A549 (cell line): ENCODE measurements at regions of chr5 and their contacts with region 1.

Region 1: GRCh38 chr5:135466178-135467050 is 14.3 kb upstream of the TIFAB start:
- DNase-seq: peak; percentile 61 to 87
- ATAC-seq: peak; percentile 87 to 95
- H3K4me3 ChIP-seq: no peak overlapping the region
- H3K27ac ChIP-seq: peak overlapping the region in 1 of 2 experiments; percentile 56; a peak in 2 of 6 replicates
- H3K4me1 ChIP-seq: no peaks in the 10 kb centered on the region
- CTCF ChIP-seq: peak; percentile 85
- EP300 ChIP-seq: no peak
- POLR2A ChIP-seq: no peak
- RAD21 ChIP-seq: peak; percentile 93 to 98

Region 2: DNA sequence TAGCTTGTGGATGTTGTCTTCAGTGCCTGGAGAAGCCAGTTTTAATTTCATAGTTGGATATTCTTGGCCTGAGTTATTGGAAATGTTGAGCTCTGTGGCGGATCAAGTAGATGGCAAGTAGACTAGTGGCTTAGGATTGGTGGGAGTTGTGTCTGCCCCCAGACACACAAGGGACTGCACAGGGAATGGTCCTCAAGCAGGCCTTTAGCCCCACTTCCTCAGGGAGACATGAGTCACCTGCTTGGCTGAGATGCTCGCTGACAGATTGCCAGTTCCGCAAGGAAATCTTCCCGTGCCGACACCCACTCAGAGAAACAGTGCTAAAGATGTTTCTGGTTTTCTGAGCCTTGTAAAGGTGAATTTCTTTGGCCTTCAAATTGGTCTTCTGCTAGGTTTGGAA is 517.5 kb before region 1 on chr5:
- CTCF ChIA-PET with region 1: no interaction called
- POLR2A ChIA-PET with region 1: no interaction called
- DNase-seq: no peak
- ATAC-seq: no peak
- H3K4me3 ChIP-seq: no peak overlapping the region
- H3K27ac ChIP-seq: no peak overlapping the region
- H3K4me1 ChIP-seq: no peaks in the 10 kb centered on the region
- CTCF ChIP-seq: no peak
- EP300 ChIP-seq: no peak
- POLR2A ChIP-seq: no peak
- RAD21 ChIP-seq: no peak

Region 3: GRCh38 chr5:135443161-135443960 is 23.1 kb before region 1 on chr5:
- CTCF ChIA-PET with region 1: interaction called, 43 read pairs
- POLR2A ChIA-PET with region 1: no interaction called
- DNase-seq: no peak
- ATAC-seq: no peak
- H3K4me3 ChIP-seq: no peak overlapping the region
- H3K27ac ChIP-seq: no peak overlapping the region
- H3K4me1 ChIP-seq: no peaks in the 10 kb centered on the region
- CTCF ChIP-seq: no peak
- EP300 ChIP-seq: no peak
- POLR2A ChIP-seq: no peak
- RAD21 ChIP-seq: no peak

Region 4: DNA sequence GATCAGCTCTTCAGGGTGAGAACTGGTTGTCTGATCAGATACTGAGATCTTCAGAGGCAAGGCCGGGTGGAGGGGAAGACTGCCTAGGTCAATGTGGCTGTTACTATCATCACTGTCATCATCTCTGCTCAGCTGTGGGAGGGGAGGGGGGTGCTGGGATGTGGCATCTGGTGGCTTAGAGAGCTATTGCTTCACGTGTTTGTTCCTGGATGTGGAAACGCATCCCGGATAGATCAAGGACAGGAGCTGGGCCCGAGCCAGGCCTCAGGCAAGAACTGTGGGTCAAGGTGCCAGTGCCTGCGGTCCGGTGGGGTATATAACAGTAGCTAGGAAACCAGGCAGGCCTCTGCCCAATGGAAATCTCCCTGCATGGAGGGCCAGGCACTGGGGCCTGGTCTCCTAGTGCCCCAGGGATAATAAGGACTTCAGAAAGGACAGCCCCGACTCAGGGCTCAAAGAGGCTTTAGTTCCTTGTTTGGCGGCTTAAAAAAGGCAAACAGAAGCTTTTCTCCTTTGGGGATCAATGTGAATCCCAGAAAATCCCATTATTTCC is 16.0 kb after region 1 on chr5:
- CTCF ChIA-PET with region 1: interaction called, 104 read pairs
- POLR2A ChIA-PET with region 1: no interaction called
- DNase-seq: no peak
- ATAC-seq: no peak
- H3K4me3 ChIP-seq: no peak overlapping the region
- H3K27ac ChIP-seq: no peak overlapping the region
- H3K4me1 ChIP-seq: no peaks in the 10 kb centered on the region
- CTCF ChIP-seq: no peak
- EP300 ChIP-seq: no peak
- POLR2A ChIP-seq: no peak
- RAD21 ChIP-seq: no peak

Region 5: DNA sequence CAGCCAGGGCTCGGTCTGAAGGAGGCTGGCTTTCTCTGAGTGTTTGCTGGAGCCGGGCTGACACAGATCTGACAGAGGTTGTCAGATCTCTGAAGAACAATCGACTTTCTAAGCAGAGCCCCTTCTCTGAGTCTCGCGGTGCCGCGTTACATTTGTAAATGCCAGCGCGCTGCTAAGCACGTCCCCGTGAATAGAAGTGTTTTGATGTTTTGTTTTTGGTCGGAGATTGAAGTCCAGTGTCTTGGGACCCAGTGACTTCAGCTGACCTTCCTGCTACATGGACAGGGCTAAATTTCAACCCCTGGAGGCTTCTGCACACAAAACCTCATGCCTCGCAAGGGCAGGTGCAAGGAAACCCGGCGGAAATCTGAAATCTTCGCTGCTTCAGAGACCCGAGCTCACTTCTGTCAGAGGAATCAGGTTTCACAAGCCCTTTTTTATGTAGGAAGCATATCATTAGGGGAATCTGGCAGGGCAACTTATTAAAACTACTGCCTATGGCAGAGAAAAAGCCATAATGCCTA is 42.1 kb after region 1 on chr5:
- CTCF ChIA-PET with region 1: interaction called, 10 read pairs
- POLR2A ChIA-PET with region 1: no interaction called
- DNase-seq: no peak
- ATAC-seq: no peak
- H3K4me3 ChIP-seq: no peak overlapping the region
- H3K27ac ChIP-seq: no peak overlapping the region
- H3K4me1 ChIP-seq: peaks cover 5% of the 10 kb centered on the region; the same call in 1 of the 3 replicates
- CTCF ChIP-seq: no peak
- EP300 ChIP-seq: no peak
- POLR2A ChIP-seq: no peak
- RAD21 ChIP-seq: no peak

Region 6: GRCh38 chr5:135535820-135536801 is 69.7 kb after region 1 on chr5 and contains the start of gene NEUROG1:
- CTCF ChIA-PET with region 1: interaction called, 17 read pairs
- POLR2A ChIA-PET with region 1: no interaction called
- DNase-seq: no peak
- ATAC-seq: no peak
- H3K4me3 ChIP-seq: peak within 1 kb of the TSS; percentile 27
- H3K27ac ChIP-seq: no peak within 1 kb of the TSS
- H3K4me1 ChIP-seq: peaks cover 7% of the 10 kb centered on the region; the same call in 1 of the 3 replicates
- CTCF ChIP-seq: no peak
- EP300 ChIP-seq: no peak
- POLR2A ChIP-seq: no peak
- RAD21 ChIP-seq: no peak
- polyA plus RNA-seq, gene NEUROG1: not detected in 2 replicates

Region 7: GRCh38 chr5:135560858-135561257 is 94.4 kb after region 1 on chr5:
- CTCF ChIA-PET with region 1: interaction called, 1,932 read pairs
- POLR2A ChIA-PET with region 1: interaction called, 3 read pairs
- DNase-seq: peak; percentile 76 to 86
- ATAC-seq: peak; percentile 93 to 98
- H3K4me3 ChIP-seq: no peak overlapping the region
- H3K27ac ChIP-seq: no peak overlapping the region
- H3K4me1 ChIP-seq: no peaks in the 10 kb centered on the region
- CTCF ChIP-seq: peak; percentile 84
- EP300 ChIP-seq: no peak
- POLR2A ChIP-seq: no peak
- RAD21 ChIP-seq: peak; percentile 80 to 82